ENCODE measurements at regions of chr5 and their contacts with region 1.

Region 1: DNA sequence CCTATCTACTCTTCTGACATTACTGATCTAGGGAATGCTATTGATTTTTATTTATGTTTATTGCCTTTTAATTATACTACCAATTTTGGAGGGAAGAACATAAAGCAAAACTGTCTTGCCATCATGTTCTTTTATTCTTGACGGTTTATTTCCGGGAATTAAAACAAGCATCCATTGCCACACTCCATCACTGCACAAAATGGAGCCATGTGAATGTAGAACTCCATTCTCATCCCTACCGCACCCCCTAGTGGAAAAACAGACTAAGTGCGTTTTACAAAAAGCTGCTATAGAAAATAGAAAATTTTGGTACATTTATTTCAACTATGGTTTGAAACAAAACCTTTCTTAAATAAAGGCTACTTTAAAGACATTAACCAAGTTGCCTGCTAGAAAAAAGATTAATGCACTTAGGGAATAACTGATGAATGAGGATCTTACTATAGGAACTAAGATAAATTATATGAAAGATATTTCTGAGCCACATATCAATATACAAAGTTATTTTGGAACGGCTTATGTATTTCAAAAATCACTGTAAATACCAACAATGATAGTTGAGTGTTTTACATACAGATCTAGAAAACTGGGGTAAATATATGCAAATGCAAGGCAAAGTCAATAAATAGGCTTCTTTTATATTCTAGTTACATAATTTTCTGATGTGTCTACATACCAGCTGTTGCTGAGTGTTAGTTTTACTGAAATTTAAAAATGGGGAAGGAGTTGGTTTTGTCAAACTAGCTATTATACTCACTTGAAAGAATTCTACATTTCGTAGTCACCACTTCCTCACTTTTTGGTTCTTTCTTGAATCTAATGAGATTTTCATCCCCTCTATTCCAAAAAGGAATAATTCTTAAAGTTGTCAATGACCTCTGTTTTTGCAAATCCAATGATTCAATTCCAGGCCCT is 26.5 kb downstream of the OXCT1 start:
- DNase-seq: peak; percentile 37
- H3K4me3 ChIP-seq: no peak overlapping the region
- H3K27ac ChIP-seq: no peak overlapping the region
- H3K4me1 ChIP-seq: no peaks in the 10 kb centered on the region
- H3K27me3 ChIP-seq: no peaks in the 10 kb centered on the region
- CTCF ChIP-seq: peak; percentile 69 to 79

Region 2: GRCh38 chr5:41270423-41271251 is 573.1 kb before region 1 on chr5:
- CTCF ChIA-PET with region 1: no interaction called
- dilution Hi-C with region 1: no loop called
- in situ Hi-C with region 1: loop called in 1 of 2 experiments (anchors 25 kb)
- intact Hi-C with region 1: loop called (anchors 1 kb)
- DNase-seq: peak; percentile 34
- H3K4me3 ChIP-seq: no peak overlapping the region
- H3K27ac ChIP-seq: no peak overlapping the region
- H3K4me1 ChIP-seq: no peaks in the 10 kb centered on the region
- H3K27me3 ChIP-seq: no peaks in the 10 kb centered on the region
- CTCF ChIP-seq: peak; percentile 68 to 83

Region 3: GRCh38 chr5:41445932-41446563 is 397.7 kb before region 1 on chr5:
- CTCF ChIA-PET with region 1: no interaction called
- dilution Hi-C with region 1: no loop called
- in situ Hi-C with region 1: no loop called
- intact Hi-C with region 1: no loop called
- DNase-seq: no peak
- H3K4me3 ChIP-seq: no peak overlapping the region
- H3K27ac ChIP-seq: no peak overlapping the region
- H3K4me1 ChIP-seq: no peaks in the 10 kb centered on the region
- H3K27me3 ChIP-seq: peaks cover 2% of the 10 kb centered on the region
- CTCF ChIP-seq: no peak

Region 4: DNA sequence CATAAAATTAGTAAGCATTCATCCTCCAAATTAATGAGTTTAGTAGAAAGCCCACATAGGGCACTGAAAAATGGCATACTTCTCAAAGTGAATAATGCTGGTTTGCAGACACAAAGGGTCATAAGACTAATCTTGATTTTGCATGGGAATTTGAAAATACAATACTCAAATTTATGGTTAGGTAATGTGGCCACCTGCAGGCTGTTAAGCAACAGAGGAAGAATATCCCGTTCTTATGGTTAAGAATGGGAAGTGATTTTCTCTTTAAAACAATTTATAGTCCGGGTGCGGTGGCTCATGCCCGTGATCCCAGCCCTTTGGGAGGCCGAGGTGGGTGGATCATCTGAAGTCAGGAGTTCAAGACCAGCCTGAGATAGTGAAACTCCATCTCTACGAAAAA is 323.9 kb before region 1 on chr5:
- CTCF ChIA-PET with region 1: no interaction called
- dilution Hi-C with region 1: no loop called
- in situ Hi-C with region 1: no loop called
- intact Hi-C with region 1: no loop called
- DNase-seq: no peak
- H3K4me3 ChIP-seq: no peak overlapping the region
- H3K27ac ChIP-seq: no peak overlapping the region
- H3K4me1 ChIP-seq: no peaks in the 10 kb centered on the region
- H3K27me3 ChIP-seq: no peaks in the 10 kb centered on the region
- CTCF ChIP-seq: peak; percentile 5 to 40

Region 5: GRCh38 chr5:41707853-41708603 is 135.7 kb before region 1 on chr5:
- CTCF ChIA-PET with region 1: no interaction called
- dilution Hi-C with region 1: no loop called
- in situ Hi-C with region 1: no loop called
- intact Hi-C with region 1: loop called (anchors 1 kb)
- DNase-seq: peak; percentile 37
- H3K4me3 ChIP-seq: no peak overlapping the region
- H3K27ac ChIP-seq: no peak overlapping the region
- H3K4me1 ChIP-seq: no peaks in the 10 kb centered on the region
- H3K27me3 ChIP-seq: no peaks in the 10 kb centered on the region
- CTCF ChIP-seq: peak; percentile 57 to 69

Region 6: GRCh38 chr5:41716382-41716781 is 127.3 kb before region 1 on chr5:
- CTCF ChIA-PET with region 1: no interaction called
- dilution Hi-C with region 1: no loop called
- in situ Hi-C with region 1: loop called in 1 of 2 experiments (anchors 5 kb)
- intact Hi-C with region 1: loop called (anchors 5 kb)
- DNase-seq: no peak
- H3K4me3 ChIP-seq: no peak overlapping the region
- H3K27ac ChIP-seq: no peak overlapping the region
- H3K4me1 ChIP-seq: no peaks in the 10 kb centered on the region
- H3K27me3 ChIP-seq: no peaks in the 10 kb centered on the region
- CTCF ChIP-seq: no peak

Region 7: GRCh38 chr5:41722359-41722950 is 121.3 kb before region 1 on chr5:
- CTCF ChIA-PET with region 1: interaction called, 6 read pairs
- dilution Hi-C with region 1: no loop called
- in situ Hi-C with region 1: loop called in 1 of 2 experiments (anchors 5 kb)
- intact Hi-C with region 1: loop called (anchors 5 kb)
- DNase-seq: no peak
- H3K4me3 ChIP-seq: no peak overlapping the region
- H3K27ac ChIP-seq: no peak overlapping the region
- H3K4me1 ChIP-seq: no peaks in the 10 kb centered on the region
- H3K27me3 ChIP-seq: no peaks in the 10 kb centered on the region
- CTCF ChIP-seq: peak; percentile 3 to 36

Measured in mammary epithelial cell (primary cell).